PC-9 (cell line): ENCODE measurements at regions of chr3 and their contacts with region 1.

Region 1: DNA sequence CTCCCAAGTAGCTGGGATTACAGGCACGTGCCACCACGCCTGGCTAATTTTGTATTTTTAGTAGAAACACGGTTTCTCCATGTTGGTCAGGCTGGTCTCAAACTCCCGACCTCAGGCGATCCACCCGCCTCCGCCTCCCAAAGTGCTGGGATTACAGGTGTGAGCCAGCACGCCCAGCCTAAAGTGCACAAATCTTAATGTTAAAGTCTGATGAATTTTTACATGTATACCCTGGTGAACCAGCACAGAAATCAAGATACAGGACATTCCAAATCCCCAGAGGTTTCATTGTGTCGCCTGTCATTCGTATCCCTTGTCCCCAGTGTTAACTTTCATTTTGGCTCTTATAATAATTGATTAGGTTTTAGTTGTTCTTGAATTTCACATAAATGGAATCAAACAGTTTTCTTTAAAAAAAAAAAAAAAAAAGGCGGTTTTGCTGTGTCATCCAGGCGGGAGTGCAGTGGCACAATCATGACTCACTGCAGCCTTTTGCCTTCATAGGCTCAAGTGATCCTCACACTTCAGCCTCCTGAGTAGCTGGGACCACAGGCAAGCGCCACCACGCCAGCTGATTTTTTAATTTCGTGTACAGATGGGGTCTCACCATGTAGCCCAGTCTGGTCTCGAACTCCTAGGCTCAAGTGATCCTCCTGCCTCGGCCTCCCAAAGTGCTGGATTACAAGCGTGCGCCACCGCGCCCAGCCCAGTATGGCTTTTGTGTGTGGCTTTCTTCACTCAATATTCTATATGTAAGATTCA is 1.5 kb upstream of the TM4SF19 start:
- DNase-seq: peak; percentile 65 to 86
- H3K4me3 ChIP-seq: peak overlapping the region; percentile 68
- H3K27ac ChIP-seq: peak overlapping the region; percentile 95
- H3K4me1 ChIP-seq: peaks cover 47% of the 10 kb centered on the region
- H3K27me3 ChIP-seq: no peaks in the 10 kb centered on the region
- CTCF ChIP-seq: no peak

Region 2: GRCh38 chr3:196136026-196136984 is 203.4 kb before region 1 on chr3:
- CTCF ChIA-PET with region 1: no interaction called
- POLR2A ChIA-PET with region 1: no interaction called
- intact Hi-C with region 1: loop called (anchors 5 kb)
- DNase-seq: peak; percentile 90 to 99
- H3K4me3 ChIP-seq: peak overlapping the region; percentile 15; the same call in 1 of the 2 replicates
- H3K27ac ChIP-seq: peak overlapping the region; percentile 85
- H3K4me1 ChIP-seq: peaks cover 70% of the 10 kb centered on the region
- H3K27me3 ChIP-seq: no peaks in the 10 kb centered on the region
- CTCF ChIP-seq: no peak

Region 3: GRCh38 chr3:196219194-196219978 is 120.3 kb before region 1 on chr3:
- CTCF ChIA-PET with region 1: no interaction called
- POLR2A ChIA-PET with region 1: no interaction called
- intact Hi-C with region 1: loop called (anchors 5 kb)
- DNase-seq: peak in 1 of 2 experiments; percentile 76
- H3K4me3 ChIP-seq: no peak overlapping the region
- H3K27ac ChIP-seq: no peak overlapping the region
- H3K4me1 ChIP-seq: peaks cover 12% of the 10 kb centered on the region
- H3K27me3 ChIP-seq: no peaks in the 10 kb centered on the region
- CTCF ChIP-seq: no peak

Region 4: DNA sequence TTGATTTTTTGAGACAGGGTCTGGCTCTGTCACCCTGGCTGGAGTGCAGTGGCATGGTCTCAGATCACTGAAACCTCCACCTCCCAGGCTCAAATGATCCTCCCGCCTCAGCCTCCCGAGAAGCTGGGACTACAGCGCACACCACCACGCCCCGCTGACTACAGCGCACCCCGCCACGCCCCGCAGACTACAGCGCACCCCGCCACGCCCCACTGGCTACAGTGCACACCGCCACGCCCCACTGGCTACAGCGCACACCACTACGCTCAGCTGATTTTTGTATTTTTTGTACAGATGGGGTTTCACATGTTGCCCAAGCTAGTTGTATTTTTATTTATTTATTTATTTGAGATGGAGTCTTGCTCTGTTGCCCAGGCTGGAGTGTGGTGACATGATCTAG is 87.8 kb before region 1 on chr3:
- CTCF ChIA-PET with region 1: interaction called, 4 read pairs
- POLR2A ChIA-PET with region 1: no interaction called
- intact Hi-C with region 1: loop called (anchors 5 kb)
- DNase-seq: no peak
- H3K4me3 ChIP-seq: no peak overlapping the region
- H3K27ac ChIP-seq: no peak overlapping the region
- H3K4me1 ChIP-seq: no peaks in the 10 kb centered on the region
- H3K27me3 ChIP-seq: no peaks in the 10 kb centered on the region
- CTCF ChIP-seq: no peak

Region 5: GRCh38 chr3:196274585-196274984 is 65.1 kb before region 1 on chr3:
- CTCF ChIA-PET with region 1: no interaction called
- POLR2A ChIA-PET with region 1: interaction called, 3 read pairs
- intact Hi-C with region 1: loop called (anchors 2 kb)
- DNase-seq: peak; percentile 45 to 79
- H3K4me3 ChIP-seq: no peak overlapping the region
- H3K27ac ChIP-seq: peak overlapping the region; percentile 59
- H3K4me1 ChIP-seq: peaks cover 27% of the 10 kb centered on the region
- H3K27me3 ChIP-seq: no peaks in the 10 kb centered on the region
- CTCF ChIP-seq: no peak

Region 6: GRCh38 chr3:196409409-196409808 is 69.7 kb after region 1 on chr3:
- CTCF ChIA-PET with region 1: no interaction called
- POLR2A ChIA-PET with region 1: no interaction called
- intact Hi-C with region 1: no loop called
- DNase-seq: no peak
- H3K4me3 ChIP-seq: no peak overlapping the region
- H3K27ac ChIP-seq: peak overlapping the region; percentile 17; the same call in 1 of the 2 replicates
- H3K4me1 ChIP-seq: no peaks in the 10 kb centered on the region
- H3K27me3 ChIP-seq: no peaks in the 10 kb centered on the region
- CTCF ChIP-seq: no peak

Region 7: GRCh38 chr3:196432137-196432879 is 92.6 kb after region 1 on chr3 and contains the start of gene UBXN7:
- CTCF ChIA-PET with region 1: interaction called, 3 read pairs
- POLR2A ChIA-PET with region 1: interaction called, 12 read pairs
- intact Hi-C with region 1: loop called (anchors 2 kb)
- DNase-seq: peak; percentile 82 to 98
- H3K4me3 ChIP-seq: peak within 1 kb of the TSS; percentile 80
- H3K27ac ChIP-seq: peak within 1 kb of the TSS; percentile 47
- H3K4me1 ChIP-seq: peaks cover 13% of the 10 kb centered on the region
- H3K27me3 ChIP-seq: no peaks in the 10 kb centered on the region
- CTCF ChIP-seq: no peak
- total RNA-seq, gene UBXN7: 68.6 and 125 TPM in 2 replicates